CD14-positive monocyte (primary cell): ENCODE measurements at regions of chr7 and their contacts with region 1.

Region 1: GRCh38 chr7:142188846-142189245 is 69.0 kb downstream of the PRSS58 start:
- DNase-seq: peak; percentile 8 to 34 (median 14)
- H3K4me3 ChIP-seq: no peak overlapping the region
- H3K4me3 Mint-ChIP-seq: no peak overlapping the region
- H3K27ac ChIP-seq: peak overlapping the region in 1 of 2 donors; percentile 39
- H3K27ac Mint-ChIP-seq: peak overlapping the region in 1 of 7 donors; percentile 55
- H3K4me1 ChIP-seq: peaks cover 23 to 28% of the 10 kb centered on the region in 2 donors
- H3K4me1 Mint-ChIP-seq: peaks cover 31% of the 10 kb centered on the region
- H3K27me3 ChIP-seq: peaks cover 0 to 4% of the 10 kb centered on the region in 2 donors
- H3K27me3 Mint-ChIP-seq: peaks cover 10 to 13% (median 12%) of the 10 kb centered on the region in 3 donors
- CTCF ChIP-seq: peak; percentile 73

Region 2: GRCh38 chr7:141641876-141642275 is 547.0 kb before region 1 on chr7:
- intact Hi-C with region 1: no loop called
- DNase-seq: no peak
- H3K4me3 ChIP-seq: no peak overlapping the region
- H3K4me3 Mint-ChIP-seq: no peak overlapping the region
- H3K27ac ChIP-seq: no peak overlapping the region
- H3K27ac Mint-ChIP-seq: peak overlapping the region in 1 of 7 donors; percentile 18
- H3K4me1 ChIP-seq: no peaks in the 10 kb centered on the region
- H3K4me1 Mint-ChIP-seq: no peaks in the 10 kb centered on the region
- H3K27me3 ChIP-seq: no peaks in the 10 kb centered on the region
- H3K27me3 Mint-ChIP-seq: peaks cover 0 to 4% (median 1%) of the 10 kb centered on the region in 3 donors
- CTCF ChIP-seq: no peak

Region 3: GRCh38 chr7:141754939-141755338 is 433.9 kb before region 1 on chr7:
- intact Hi-C with region 1: loop called (anchors 5 to 10 kb)
- DNase-seq: peak; percentile 6 to 39 (median 37)
- H3K4me3 ChIP-seq: no peak overlapping the region
- H3K4me3 Mint-ChIP-seq: no peak overlapping the region
- H3K27ac ChIP-seq: no peak overlapping the region
- H3K27ac Mint-ChIP-seq: peak overlapping the region in 1 of 7 donors; percentile 47
- H3K4me1 ChIP-seq: no peaks in the 10 kb centered on the region
- H3K4me1 Mint-ChIP-seq: no peaks in the 10 kb centered on the region
- H3K27me3 ChIP-seq: no peaks in the 10 kb centered on the region
- H3K27me3 Mint-ChIP-seq: no peaks in the 10 kb centered on the region
- CTCF ChIP-seq: peak; percentile 73

Region 4: DNA sequence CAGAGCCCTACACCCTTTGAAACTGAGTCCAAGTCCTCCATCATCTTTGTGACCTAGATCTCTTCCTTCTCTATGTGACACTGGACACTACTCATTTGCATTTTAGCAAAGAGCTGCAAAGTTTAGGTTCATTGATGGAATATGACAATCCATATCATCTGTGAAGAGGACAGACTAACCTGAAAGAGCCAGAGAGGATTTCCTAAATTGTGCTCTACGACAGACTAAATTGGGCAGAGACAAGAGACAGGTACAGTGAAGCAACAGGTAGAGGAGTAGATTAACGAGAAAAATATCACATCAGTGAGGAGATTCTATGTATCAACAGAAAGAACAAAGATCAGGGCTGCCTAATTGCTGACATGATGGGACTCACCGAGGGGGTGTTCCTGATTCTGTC is 425.0 kb before region 1 on chr7 and contains the start of gene TAS2R3:
- intact Hi-C with region 1: loop called in 1 of 2 experiments (anchors 10 kb)
- DNase-seq: no peak
- H3K4me3 ChIP-seq: no peak within 1 kb of the TSS
- H3K4me3 Mint-ChIP-seq: no peak within 1 kb of the TSS
- H3K27ac ChIP-seq: no peak within 1 kb of the TSS
- H3K27ac Mint-ChIP-seq: peak within 1 kb of the TSS in 1 of 7 donors; percentile 66
- H3K4me1 ChIP-seq: no peaks in the 10 kb centered on the region
- H3K4me1 Mint-ChIP-seq: peaks cover 11% of the 10 kb centered on the region
- H3K27me3 ChIP-seq: no peaks in the 10 kb centered on the region
- H3K27me3 Mint-ChIP-seq: no peaks in the 10 kb centered on the region
- CTCF ChIP-seq: no peak
- polyA plus RNA-seq, gene TAS2R3: not detected

Region 5: DNA sequence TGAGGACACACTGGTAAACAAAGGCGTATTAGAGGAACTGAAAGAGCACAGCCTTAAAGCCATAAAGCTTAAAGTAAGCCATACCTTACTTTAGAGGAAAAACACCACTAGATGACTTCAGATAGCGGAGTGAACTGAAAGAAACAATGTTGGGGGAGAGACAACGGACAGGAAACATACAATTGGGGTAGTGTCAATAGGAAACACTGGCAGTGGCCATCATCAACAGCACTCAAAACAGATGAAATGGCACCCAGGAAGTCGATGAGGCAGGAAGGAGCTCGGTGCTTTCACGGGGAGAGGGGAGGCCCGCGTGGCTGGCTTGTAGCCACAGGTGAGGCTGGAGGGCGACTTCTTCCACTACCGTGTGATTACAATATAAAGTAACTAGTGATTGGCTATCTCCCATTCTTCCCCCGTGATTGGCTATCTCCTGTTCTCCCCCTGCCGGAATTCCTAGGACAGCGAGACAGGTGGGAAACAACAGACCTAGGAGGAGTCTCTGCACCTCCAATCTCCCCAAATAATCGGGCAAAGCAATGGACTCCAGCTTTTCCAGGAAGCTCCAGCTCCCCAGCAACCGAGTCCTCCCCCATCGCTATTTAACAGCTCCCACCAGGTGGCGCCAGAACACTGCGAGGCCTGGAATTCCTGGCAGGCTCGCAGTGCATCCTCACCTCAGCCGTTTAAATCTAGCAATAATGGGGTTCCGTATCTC is 212.9 kb before region 1 on chr7:
- intact Hi-C with region 1: loop called (anchors 5 to 10 kb)
- DNase-seq: peak; percentile 75 to 82 (median 79)
- H3K4me3 ChIP-seq: peak overlapping the region; percentile 54 to 82 (median 58)
- H3K4me3 Mint-ChIP-seq: peak overlapping the region; percentile 82 to 90
- H3K27ac ChIP-seq: peak overlapping the region; percentile 42 to 95
- H3K27ac Mint-ChIP-seq: peak overlapping the region; percentile 76 to 98 (median 94)
- H3K4me1 ChIP-seq: peaks cover 18 to 23% of the 10 kb centered on the region in 2 donors
- H3K4me1 Mint-ChIP-seq: peaks cover 31% of the 10 kb centered on the region
- H3K27me3 ChIP-seq: no peaks in the 10 kb centered on the region
- H3K27me3 Mint-ChIP-seq: peaks cover 0 to 1% (median 0%) of the 10 kb centered on the region in 3 donors
- CTCF ChIP-seq: peak; percentile 93

Region 6: DNA sequence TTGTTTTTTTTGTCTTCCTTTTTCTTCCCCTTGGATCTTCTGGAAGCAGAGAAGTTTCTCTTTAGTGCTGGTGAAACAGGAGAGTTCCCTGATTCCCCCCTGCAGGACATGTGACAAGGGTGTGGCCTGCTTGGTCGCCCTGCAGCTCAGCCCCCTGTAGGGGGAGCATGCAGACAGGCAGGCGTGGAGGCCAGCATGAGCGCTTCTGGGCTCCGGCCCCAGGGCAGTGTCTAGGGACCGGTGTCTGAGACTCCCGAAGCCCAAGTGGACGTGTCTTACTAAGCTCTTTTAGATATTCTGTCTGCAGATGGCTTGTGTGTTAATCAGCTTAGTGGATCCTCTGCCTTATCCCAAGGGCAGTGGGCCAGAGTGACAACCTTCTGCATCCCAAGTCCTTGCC is 42.9 kb after region 1 on chr7:
- intact Hi-C with region 1: no loop called
- DNase-seq: no peak
- H3K4me3 ChIP-seq: no peak overlapping the region
- H3K4me3 Mint-ChIP-seq: no peak overlapping the region
- H3K27ac ChIP-seq: no peak overlapping the region
- H3K27ac Mint-ChIP-seq: peak overlapping the region in 1 of 7 donors; percentile 40
- H3K4me1 ChIP-seq: no peaks in the 10 kb centered on the region
- H3K4me1 Mint-ChIP-seq: peaks cover 3% of the 10 kb centered on the region
- H3K27me3 ChIP-seq: no peaks in the 10 kb centered on the region
- H3K27me3 Mint-ChIP-seq: peaks cover 0 to 4% (median 4%) of the 10 kb centered on the region in 3 donors
- CTCF ChIP-seq: no peak